GM12878 (cell line): ENCODE measurements at regions of chr12 and their contacts with region 1.

Region 1: DNA sequence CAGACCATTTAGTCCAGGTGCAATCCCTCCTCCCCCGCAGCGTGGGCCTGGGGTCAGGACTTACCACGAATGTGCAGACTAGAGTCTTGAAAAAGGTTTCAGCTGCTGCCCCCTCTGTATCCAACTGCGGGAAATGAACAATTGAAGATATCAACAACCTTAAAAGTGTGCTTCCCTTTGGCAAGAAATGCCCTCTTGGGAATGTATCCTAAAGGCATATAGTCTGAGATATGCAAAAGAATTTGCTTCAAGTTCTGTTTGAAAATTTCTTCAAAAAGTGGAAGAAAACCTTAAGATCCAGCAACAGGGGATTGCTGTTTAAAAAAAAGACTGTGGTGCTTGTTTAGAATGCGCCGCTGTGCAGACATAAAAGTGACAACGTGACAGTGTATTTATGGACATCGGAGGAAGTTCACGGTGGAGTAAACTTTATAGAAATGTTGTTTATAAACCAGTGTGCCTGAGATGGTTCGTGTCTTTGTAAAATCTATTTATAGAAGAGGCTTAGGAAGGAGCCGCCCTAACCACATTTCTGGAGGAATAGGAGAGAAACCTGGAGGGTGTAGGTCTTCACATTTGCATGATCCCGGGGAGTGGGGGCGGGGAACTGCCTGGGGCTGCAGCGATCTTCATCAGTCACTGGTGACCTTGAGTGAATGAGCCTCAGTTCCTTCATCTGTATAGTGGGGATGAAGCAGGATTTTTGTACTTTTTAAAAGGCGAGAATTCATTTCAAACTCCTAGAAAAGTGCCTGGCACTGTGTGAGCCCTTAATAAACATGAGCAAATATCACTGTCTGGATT is 27.4 kb downstream of the ADGRD1 start:
- DNase-seq: no peak
- ATAC-seq: peak; percentile 30; the same call in 2 of the 3 replicates
- H3K4me3 ChIP-seq: 0 out of 2 replicates have a peak overlapping the region, but pooled peaks have one; percentile 3
- H3K27ac ChIP-seq: 0 out of 2 replicates have a peak overlapping the region, but pooled peaks have one; percentile 19
- H3K4me1 ChIP-seq: peaks cover 25% of the 10 kb centered on the region
- H3K27me3 ChIP-seq: no peaks in the 10 kb centered on the region
- CTCF ChIP-seq: no peak
- EP300 ChIP-seq: no peak; a peak in 1 of 4 replicates
- POLR2A ChIP-seq: no peak
- RAD21 ChIP-seq: no peak

Region 2: GRCh38 chr12:130871286-130872178 is 109.6 kb before region 1 on chr12 and contains the start of gene RAN:
- CTCF ChIA-PET with region 1: interaction called, 4 read pairs
- POLR2A ChIA-PET with region 1: interaction called, 5 read pairs
- RAD21 ChIA-PET with region 1: interaction called, 4 read pairs
- SMC1A ChIA-PET with region 1: interaction called, 4 read pairs
- in situ Hi-C with region 1: no loop called
- intact Hi-C with region 1: loop called (anchors 5 kb)
- DNase-seq: peak; percentile 67
- ATAC-seq: peak; percentile 76
- H3K4me3 ChIP-seq: peak within 1 kb of the TSS; percentile 98
- H3K27ac ChIP-seq: peak within 1 kb of the TSS; percentile 93
- H3K4me1 ChIP-seq: peaks cover 7% of the 10 kb centered on the region
- H3K27me3 ChIP-seq: no peaks in the 10 kb centered on the region
- CTCF ChIP-seq: no peak
- EP300 ChIP-seq: no peak
- POLR2A ChIP-seq: peak; percentile 91
- RAD21 ChIP-seq: no peak
- polyA plus RNA-seq, gene RAN: 3,131 to 3,633 TPM

Region 3: DNA sequence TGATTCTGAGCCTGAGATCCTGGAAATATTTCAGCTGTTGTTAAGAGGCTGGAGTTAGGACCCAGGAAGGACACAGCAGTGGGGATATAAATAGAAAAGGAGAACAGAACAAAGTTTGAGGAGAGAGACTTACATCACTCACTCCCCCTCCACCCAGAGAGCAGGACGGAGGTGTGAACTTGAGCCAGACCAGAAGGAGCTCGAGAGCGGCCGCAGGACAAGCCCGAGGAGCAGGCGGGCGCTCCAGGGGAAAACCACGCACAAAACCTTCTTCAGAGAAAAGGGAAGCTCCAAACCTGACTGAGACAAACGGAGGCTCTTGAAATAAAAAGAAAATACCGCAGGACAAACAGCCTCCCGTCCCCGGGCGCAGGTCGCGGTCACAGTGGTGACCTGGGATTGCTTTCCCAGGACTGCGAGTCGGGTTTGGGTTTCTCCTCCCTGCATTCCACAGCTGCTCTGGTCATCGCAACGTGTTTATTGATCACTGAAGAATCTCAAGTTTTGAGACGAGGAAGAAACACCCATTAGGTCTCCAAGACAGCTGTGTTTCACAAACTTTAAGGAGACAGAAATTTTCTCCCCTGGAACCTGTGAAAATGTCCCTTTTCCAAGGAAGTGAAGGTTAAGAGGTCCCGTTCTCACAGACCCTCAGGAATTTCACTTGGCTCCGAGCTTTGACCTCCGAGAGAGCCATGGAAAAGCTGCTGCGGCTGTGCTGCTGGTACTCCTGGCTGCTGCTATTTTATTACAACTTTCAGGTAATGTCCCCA is 27.2 kb before region 1 on chr12 and contains the start of gene ADGRD1:
- CTCF ChIA-PET with region 1: interaction called, 5 read pairs
- POLR2A ChIA-PET with region 1: interaction called, 3 read pairs
- RAD21 ChIA-PET with region 1: interaction called, 12 read pairs
- SMC1A ChIA-PET with region 1: interaction called, 5 read pairs
- in situ Hi-C with region 1: no loop called
- intact Hi-C with region 1: no loop called
- DNase-seq: no peak
- ATAC-seq: peak; percentile 79
- H3K4me3 ChIP-seq: 0 out of 2 replicates have a peak within 1 kb of the TSS, but pooled peaks have one; percentile 18
- H3K27ac ChIP-seq: no peak within 1 kb of the TSS
- H3K4me1 ChIP-seq: peaks cover 4% of the 10 kb centered on the region; the same call in 1 of the 2 replicates
- H3K27me3 ChIP-seq: no peaks in the 10 kb centered on the region
- CTCF ChIP-seq: no peak
- EP300 ChIP-seq: no peak
- POLR2A ChIP-seq: no peak
- RAD21 ChIP-seq: no peak
- polyA plus RNA-seq, gene ADGRD1: 0.15 to 0.60 TPM

Region 4: GRCh38 chr12:130970165-130970907 is 10.8 kb before region 1 on chr12:
- CTCF ChIA-PET with region 1: interaction called, 3 read pairs
- POLR2A ChIA-PET with region 1: interaction called, 10 read pairs
- RAD21 ChIA-PET with region 1: interaction called, 18 read pairs
- SMC1A ChIA-PET with region 1: interaction called, 13 read pairs
- in situ Hi-C with region 1: no loop called
- intact Hi-C with region 1: no loop called
- DNase-seq: peak; percentile 68
- ATAC-seq: peak; percentile 94
- H3K4me3 ChIP-seq: 0 out of 2 replicates have a peak overlapping the region, but pooled peaks have one; percentile 35
- H3K27ac ChIP-seq: no peak overlapping the region
- H3K4me1 ChIP-seq: peaks cover 5% of the 10 kb centered on the region; the same call in 1 of the 2 replicates
- H3K27me3 ChIP-seq: no peaks in the 10 kb centered on the region
- CTCF ChIP-seq: no peak
- EP300 ChIP-seq: peak in 1 of 2 experiments; percentile 55; a peak in 1 of 4 replicates
- POLR2A ChIP-seq: no peak
- RAD21 ChIP-seq: no peak

Region 5: GRCh38 chr12:131002216-131002631 is 21.1 kb after region 1 on chr12:
- CTCF ChIA-PET with region 1: interaction called, 6 read pairs
- POLR2A ChIA-PET with region 1: interaction called, 4 read pairs
- RAD21 ChIA-PET with region 1: interaction called, 8 read pairs
- SMC1A ChIA-PET with region 1: interaction called, 13 read pairs
- in situ Hi-C with region 1: no loop called
- intact Hi-C with region 1: no loop called
- DNase-seq: peak; percentile 60
- ATAC-seq: peak; percentile 92
- H3K4me3 ChIP-seq: no peak overlapping the region
- H3K27ac ChIP-seq: peak overlapping the region; percentile 9
- H3K4me1 ChIP-seq: peaks cover 14% of the 10 kb centered on the region
- H3K27me3 ChIP-seq: no peaks in the 10 kb centered on the region
- CTCF ChIP-seq: no peak
- EP300 ChIP-seq: peak in 1 of 2 experiments; percentile 84; a peak in 2 of 4 replicates
- POLR2A ChIP-seq: peak; percentile 61; the same call in 1 of the 2 replicates
- RAD21 ChIP-seq: peak; percentile 13; the same call in 1 of the 2 replicates